Psoas muscle (tissue), 8 donors: ENCODE measurements at regions of chr17 and their contacts with region 1.

Region 1: GRCh38 chr17:4444782-4445473 is 11.2 kb downstream of the SPNS3 start:
- DNase-seq: peak; percentile 69 to 86
- ATAC-seq: peak; percentile 85 to 97 (median 94)
- H3K4me3 ChIP-seq: no peak overlapping the region
- H3K27ac ChIP-seq: no peak overlapping the region
- H3K4me1 ChIP-seq: no peaks in the 10 kb centered on the region
- H3K27me3 ChIP-seq: no peaks in the 10 kb centered on the region
- CTCF ChIP-seq: no peak

Region 2: GRCh38 chr17:4509401-4509800 is 64.5 kb after region 1 on chr17:
- intact Hi-C with region 1: no loop called
- DNase-seq: no peak
- ATAC-seq: peak in 1 of 4 donors; percentile 28
- H3K4me3 ChIP-seq: no peak overlapping the region
- H3K27ac ChIP-seq: no peak overlapping the region
- H3K4me1 ChIP-seq: peaks cover 7% of the 10 kb centered on the region
- H3K27me3 ChIP-seq: peaks cover 0 to 4% (median 0%) of the 10 kb centered on the region in 3 donors
- CTCF ChIP-seq: no peak

Region 3: GRCh38 chr17:4635823-4636375 is 191.0 kb after region 1 on chr17:
- intact Hi-C with region 1: loop called in 1 of 2 experiments (anchors 10 kb)
- DNase-seq: no peak
- ATAC-seq: no peak
- H3K4me3 ChIP-seq: no peak overlapping the region
- H3K27ac ChIP-seq: no peak overlapping the region
- H3K4me1 ChIP-seq: no peaks in the 10 kb centered on the region
- H3K27me3 ChIP-seq: peaks cover 0 to 50% (median 9%) of the 10 kb centered on the region in 3 donors
- CTCF ChIP-seq: no peak